CD4-positive, alpha-beta memory T cell (primary cell): ENCODE measurements at regions of chr17 and their contacts with region 1.

Region 1: DNA sequence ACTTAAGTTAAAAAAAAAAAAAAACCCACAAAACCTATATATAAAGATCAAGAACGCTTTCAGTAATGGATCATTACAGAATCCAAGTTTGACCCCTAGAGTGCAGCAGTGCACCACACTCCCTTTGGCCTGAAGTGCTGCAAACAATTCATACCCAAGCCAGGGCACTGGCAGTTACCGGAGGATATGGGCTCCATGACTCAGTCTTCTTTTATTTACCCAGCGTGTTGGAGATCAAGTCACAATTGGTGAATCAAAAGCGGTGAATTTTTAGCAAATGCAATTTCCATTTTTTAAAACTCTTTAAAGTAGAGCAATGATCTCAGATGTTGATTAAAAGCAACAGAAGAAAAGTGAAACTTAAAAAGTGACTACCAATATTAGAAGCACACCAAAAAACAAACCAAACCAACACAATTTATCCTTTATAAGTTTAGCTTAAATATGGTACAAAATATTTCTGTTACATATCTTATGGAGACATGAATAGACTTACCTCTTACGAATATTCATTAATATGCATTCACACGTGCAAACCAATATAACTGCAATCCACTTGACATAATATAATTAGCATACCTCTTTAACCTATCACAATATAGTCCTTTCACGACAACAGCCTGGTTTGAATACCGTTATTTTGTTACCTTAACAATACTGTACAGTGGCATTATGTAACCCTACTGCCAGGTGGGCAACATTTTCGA is 46.3 kb downstream of the ZNF652 start:
- DNase-seq: peak; percentile 76 to 87 (median 77)
- H3K4me3 ChIP-seq: no peak overlapping the region
- H3K4me3 Mint-ChIP-seq: peak overlapping the region; percentile 38 to 87 (median 80)
- H3K27ac ChIP-seq: no peak overlapping the region
- H3K27ac Mint-ChIP-seq: peak overlapping the region; percentile 31 to 86 (median 60)
- H3K4me1 ChIP-seq: peaks cover 12% of the 10 kb centered on the region
- H3K4me1 Mint-ChIP-seq: peaks cover 17 to 41% (median 26%) of the 10 kb centered on the region in 4 donors
- H3K27me3 ChIP-seq: no peaks in the 10 kb centered on the region
- H3K27me3 Mint-ChIP-seq: no peaks in the 10 kb centered on the region

Region 2: DNA sequence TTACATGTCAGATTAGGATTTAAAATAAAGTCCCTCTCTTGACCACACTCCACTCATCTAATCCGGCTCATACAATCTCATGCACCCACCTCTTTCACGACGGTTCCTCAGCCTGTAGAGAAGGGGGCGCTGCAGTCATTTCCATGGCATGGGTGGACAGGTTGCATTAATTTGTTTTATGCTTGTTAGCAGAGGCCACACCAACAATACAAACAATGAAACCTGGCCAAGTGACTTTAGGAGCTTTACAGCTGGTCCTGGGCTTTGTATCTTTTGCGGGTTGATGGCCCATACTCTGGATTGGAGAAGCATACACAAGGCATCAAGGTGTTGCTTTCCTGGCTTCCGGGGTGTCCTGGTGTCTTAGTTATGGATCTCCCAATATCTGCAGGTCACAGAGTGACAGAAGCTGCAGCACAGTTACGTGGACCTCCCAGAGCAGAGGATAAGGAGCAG is 361.4 kb before region 1 on chr17:
- CTCF ChIA-PET with region 1: no interaction called
- POLR2A ChIA-PET with region 1: no interaction called
- intact Hi-C with region 1: no loop called
- DNase-seq: no peak
- H3K4me3 ChIP-seq: no peak overlapping the region
- H3K4me3 Mint-ChIP-seq: no peak overlapping the region
- H3K27ac ChIP-seq: no peak overlapping the region
- H3K27ac Mint-ChIP-seq: no peak overlapping the region
- H3K4me1 ChIP-seq: no peaks in the 10 kb centered on the region
- H3K4me1 Mint-ChIP-seq: peaks cover 0 to 2% (median under 1%) of the 10 kb centered on the region in 4 donors
- H3K27me3 ChIP-seq: no peaks in the 10 kb centered on the region
- H3K27me3 Mint-ChIP-seq: peaks cover 11 to 25% of the 10 kb centered on the region in 2 donors

Region 3: DNA sequence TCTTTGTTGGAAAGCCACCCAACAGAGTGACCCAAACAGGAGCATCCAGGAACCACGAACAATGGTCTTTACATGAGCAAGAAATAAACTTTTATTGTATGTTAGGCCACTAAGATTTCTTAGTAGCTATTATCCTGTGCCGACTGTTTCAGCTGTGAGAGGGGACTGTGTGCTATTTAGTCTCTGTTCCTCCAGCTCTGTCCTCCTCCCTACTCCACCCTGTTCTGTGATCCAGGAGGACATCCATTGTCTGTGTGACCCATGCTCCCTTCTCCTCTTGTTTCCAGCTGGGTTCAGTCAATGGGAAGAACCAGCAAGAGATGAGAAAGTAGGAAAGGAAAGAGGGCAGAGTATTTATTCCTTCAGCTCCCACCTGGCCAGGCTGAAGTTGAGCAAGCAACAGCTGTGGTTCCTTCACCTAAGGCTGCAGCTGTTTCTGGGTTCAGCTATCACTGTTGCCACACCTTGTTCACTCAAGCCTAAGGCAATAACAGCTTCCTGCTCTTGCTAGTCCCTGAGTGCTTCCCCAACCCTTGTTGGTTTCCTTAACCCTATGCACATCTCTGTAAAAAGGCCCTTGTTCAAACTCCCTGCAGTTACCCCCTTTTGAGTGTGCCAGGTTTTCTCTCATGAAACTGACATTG is 198.0 kb before region 1 on chr17:
- CTCF ChIA-PET with region 1: no interaction called
- POLR2A ChIA-PET with region 1: no interaction called
- intact Hi-C with region 1: no loop called
- DNase-seq: no peak
- H3K4me3 ChIP-seq: no peak overlapping the region
- H3K4me3 Mint-ChIP-seq: no peak overlapping the region
- H3K27ac ChIP-seq: no peak overlapping the region
- H3K27ac Mint-ChIP-seq: no peak overlapping the region
- H3K4me1 ChIP-seq: no peaks in the 10 kb centered on the region
- H3K4me1 Mint-ChIP-seq: no peaks in the 10 kb centered on the region
- H3K27me3 ChIP-seq: peaks cover 10% of the 10 kb centered on the region
- H3K27me3 Mint-ChIP-seq: peaks cover 25 to 33% of the 10 kb centered on the region in 2 donors

Region 4: DNA sequence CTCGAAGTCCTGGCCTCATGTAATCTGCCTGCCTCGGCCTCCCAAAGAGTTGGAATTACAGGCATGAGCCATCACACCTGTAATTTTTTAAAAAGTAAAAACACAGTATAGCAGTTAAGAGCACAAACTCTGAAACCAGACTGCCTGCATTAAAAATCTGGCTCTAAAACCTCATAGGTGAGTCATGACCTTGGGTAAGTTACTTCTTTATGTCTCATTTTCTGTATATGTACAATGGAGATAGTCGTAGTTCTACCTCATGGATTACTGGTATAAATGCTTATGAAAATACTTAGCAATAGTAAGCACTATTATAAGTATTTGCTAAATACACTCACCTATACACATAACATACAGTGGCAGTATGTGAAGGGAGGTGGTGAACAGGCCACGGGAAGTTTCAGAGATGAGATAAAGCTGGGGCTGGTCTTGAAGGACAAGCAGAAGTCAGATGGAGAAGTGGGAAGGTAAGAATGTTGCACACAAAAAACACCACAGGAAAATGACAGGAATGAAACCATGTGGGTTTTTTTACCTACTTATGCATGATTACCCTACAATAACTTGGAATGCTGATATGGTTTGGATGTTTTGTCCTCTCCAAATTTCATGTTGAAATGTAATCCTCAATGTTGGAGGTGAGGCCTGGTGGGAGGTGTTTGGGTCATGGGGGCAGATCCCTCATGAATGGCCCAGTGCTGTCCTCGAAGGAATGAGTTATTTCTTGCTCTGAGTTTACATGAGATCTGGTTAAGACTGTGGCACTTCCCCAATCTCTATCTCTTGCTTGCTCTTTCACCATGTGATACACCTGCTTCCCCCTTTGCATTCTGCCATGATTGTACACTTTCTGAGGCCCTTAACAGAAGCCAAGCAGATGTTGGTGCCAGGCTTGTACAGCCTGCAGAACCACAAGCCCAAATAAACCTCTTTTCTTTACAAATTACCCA is 12.4 kb after region 1 on chr17:
- CTCF ChIA-PET with region 1: interaction called, 11 read pairs
- POLR2A ChIA-PET with region 1: interaction called, 4 read pairs
- intact Hi-C with region 1: no loop called
- DNase-seq: no peak
- H3K4me3 ChIP-seq: no peak overlapping the region
- H3K4me3 Mint-ChIP-seq: peak overlapping the region in 4 of 8 donors; percentile 4 to 35 (median 20)
- H3K27ac ChIP-seq: no peak overlapping the region
- H3K27ac Mint-ChIP-seq: peak overlapping the region; percentile 10 to 90 (median 60)
- H3K4me1 ChIP-seq: peaks cover 26% of the 10 kb centered on the region
- H3K4me1 Mint-ChIP-seq: peaks cover 37 to 63% (median 51%) of the 10 kb centered on the region in 4 donors
- H3K27me3 ChIP-seq: no peaks in the 10 kb centered on the region
- H3K27me3 Mint-ChIP-seq: no peaks in the 10 kb centered on the region

Region 5: GRCh38 chr17:49361902-49362722 is 46.4 kb after region 1 on chr17 and contains the start of gene ZNF652:
- CTCF ChIA-PET with region 1: interaction called, 170 read pairs
- POLR2A ChIA-PET with region 1: interaction called, 38 read pairs
- intact Hi-C with region 1: loop called (anchors 1 kb)
- DNase-seq: peak; percentile 96 to 98 (median 97)
- H3K4me3 ChIP-seq: peak within 1 kb of the TSS; percentile 48 to 61
- H3K4me3 Mint-ChIP-seq: peak within 1 kb of the TSS; percentile 91 to 98 (median 94)
- H3K27ac ChIP-seq: peak within 1 kb of the TSS; percentile 66
- H3K27ac Mint-ChIP-seq: peak within 1 kb of the TSS; percentile 91 to 98 (median 96)
- H3K4me1 ChIP-seq: peaks cover 62% of the 10 kb centered on the region
- H3K4me1 Mint-ChIP-seq: peaks cover 43 to 64% (median 57%) of the 10 kb centered on the region in 4 donors
- H3K27me3 ChIP-seq: no peaks in the 10 kb centered on the region
- H3K27me3 Mint-ChIP-seq: no peaks in the 10 kb centered on the region
- total RNA-seq, gene ZNF652: 64.2 to 68.6 TPM

Region 6: GRCh38 chr17:49390548-49391324 is 75.0 kb after region 1 on chr17:
- CTCF ChIA-PET with region 1: interaction called, 142 read pairs
- POLR2A ChIA-PET with region 1: interaction called, 15 read pairs
- intact Hi-C with region 1: loop called (anchors 1 kb)
- DNase-seq: peak in 1 of 5 donors; percentile 29
- H3K4me3 ChIP-seq: no peak overlapping the region
- H3K4me3 Mint-ChIP-seq: peak overlapping the region in 7 of 8 donors; percentile 63 to 89 (median 85)
- H3K27ac ChIP-seq: peak overlapping the region; percentile 25
- H3K27ac Mint-ChIP-seq: peak overlapping the region; percentile 76 to 98 (median 85)
- H3K4me1 ChIP-seq: peaks cover 63% of the 10 kb centered on the region
- H3K4me1 Mint-ChIP-seq: peaks cover 46 to 74% (median 60%) of the 10 kb centered on the region in 4 donors
- H3K27me3 ChIP-seq: no peaks in the 10 kb centered on the region
- H3K27me3 Mint-ChIP-seq: no peaks in the 10 kb centered on the region

Region 7: DNA sequence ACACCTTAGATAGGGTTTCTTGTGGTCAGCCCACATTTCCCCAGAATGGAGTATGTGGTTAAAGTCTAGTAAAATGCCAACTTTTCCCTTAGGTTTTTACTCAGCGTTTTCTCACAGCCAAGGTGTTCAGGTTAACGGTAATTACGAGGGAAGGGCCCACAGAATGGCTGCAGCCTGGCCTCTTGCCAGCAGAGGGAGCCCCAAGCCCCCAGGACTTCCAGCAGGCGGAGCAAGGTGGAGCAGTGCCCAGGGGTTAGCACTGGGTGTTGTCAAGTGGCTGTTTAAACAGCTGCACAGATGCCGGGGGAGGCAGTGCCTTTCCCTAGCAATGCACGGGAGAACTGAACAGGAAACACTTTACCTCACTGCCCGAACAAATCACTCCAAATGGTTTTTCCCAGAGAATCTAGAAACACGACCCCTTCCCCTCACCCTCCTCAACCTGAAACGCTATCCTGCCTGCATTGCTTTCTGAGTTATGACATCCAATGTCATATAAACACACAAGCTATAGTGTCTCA is 92.3 kb after region 1 on chr17:
- CTCF ChIA-PET with region 1: interaction called, 21 read pairs
- POLR2A ChIA-PET with region 1: no interaction called
- intact Hi-C with region 1: no loop called
- DNase-seq: peak; percentile 75 to 80 (median 78)
- H3K4me3 ChIP-seq: no peak overlapping the region
- H3K4me3 Mint-ChIP-seq: peak overlapping the region in 1 of 8 donors; percentile 43
- H3K27ac ChIP-seq: no peak overlapping the region
- H3K27ac Mint-ChIP-seq: peak overlapping the region; percentile 1 to 72 (median 65)
- H3K4me1 ChIP-seq: peaks cover 10% of the 10 kb centered on the region
- H3K4me1 Mint-ChIP-seq: peaks cover 10 to 30% (median 15%) of the 10 kb centered on the region in 4 donors
- H3K27me3 ChIP-seq: no peaks in the 10 kb centered on the region
- H3K27me3 Mint-ChIP-seq: no peaks in the 10 kb centered on the region